ENCODE measurements at regions of chr3 and their contacts with region 1.

Region 1: DNA sequence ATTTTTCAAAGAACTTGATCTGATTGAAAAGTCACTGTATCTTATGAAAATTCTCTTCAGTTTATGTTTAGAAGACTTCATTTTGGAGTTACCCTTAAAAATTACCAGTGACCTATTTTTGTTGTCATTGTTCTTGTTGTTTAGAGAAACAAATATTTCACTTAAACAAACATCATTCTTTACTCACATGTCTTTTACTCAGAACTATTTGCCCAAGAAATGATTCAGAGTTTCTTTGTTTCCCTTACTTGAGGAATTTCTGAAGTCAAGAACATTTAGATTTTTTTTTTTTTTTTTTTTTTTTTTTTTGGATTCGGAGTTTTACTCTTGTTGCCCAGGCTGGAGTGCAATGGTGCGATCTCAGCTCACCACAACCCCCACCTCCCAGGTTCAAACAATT is 259.6 kb upstream of the UBE2E1 start:
- DNase-seq: no peak
- ATAC-seq: no peak
- H3K4me3 Mint-ChIP-seq: no peak overlapping the region
- H3K27ac Mint-ChIP-seq: no peak overlapping the region
- H3K4me1 Mint-ChIP-seq: peaks cover 9% of the 10 kb centered on the region
- H3K27me3 Mint-ChIP-seq: no peaks in the 10 kb centered on the region
- CTCF ChIP-seq: no peak

Region 2: DNA sequence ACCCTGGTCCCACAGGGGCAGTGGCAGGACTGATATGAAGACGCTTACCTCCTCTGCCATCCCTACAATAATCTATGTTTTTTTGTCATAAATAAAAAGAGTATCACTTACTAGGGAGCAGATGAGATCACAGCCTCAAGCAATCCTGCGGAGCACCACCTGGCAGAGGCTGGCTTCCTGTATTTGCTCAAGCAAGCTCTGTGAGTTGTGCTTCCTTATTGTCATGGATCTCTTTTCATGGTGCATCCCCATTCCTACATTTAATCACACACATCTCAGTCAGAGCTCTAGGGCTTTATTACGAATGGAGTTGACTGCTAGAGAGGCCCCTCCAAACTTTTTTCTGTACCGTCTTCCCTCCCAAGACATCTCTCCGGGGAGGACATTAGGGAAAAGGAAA is 157.1 kb before region 1 on chr3:
- CTCF ChIA-PET with region 1: no interaction called
- POLR2A ChIA-PET with region 1: no interaction called
- intact Hi-C with region 1: no loop called
- DNase-seq: no peak
- ATAC-seq: no peak
- H3K4me3 Mint-ChIP-seq: no peak overlapping the region
- H3K27ac Mint-ChIP-seq: no peak overlapping the region
- H3K4me1 Mint-ChIP-seq: peaks cover 68% of the 10 kb centered on the region
- H3K27me3 Mint-ChIP-seq: no peaks in the 10 kb centered on the region
- CTCF ChIP-seq: no peak

Region 3: GRCh38 chr3:23519314-23520208 is 26.6 kb before region 1 on chr3:
- CTCF ChIA-PET with region 1: no interaction called
- POLR2A ChIA-PET with region 1: interaction called, 11 read pairs
- intact Hi-C with region 1: no loop called
- DNase-seq: no peak
- ATAC-seq: peak; percentile 91
- H3K4me3 Mint-ChIP-seq: peak overlapping the region; percentile 13
- H3K27ac Mint-ChIP-seq: no peak overlapping the region
- H3K4me1 Mint-ChIP-seq: peaks cover 31% of the 10 kb centered on the region
- H3K27me3 Mint-ChIP-seq: no peaks in the 10 kb centered on the region
- CTCF ChIP-seq: no peak

Measured in activated B cell treated with CpG ODN at 0.5 μM for 24 hours (primary cell).